Caco-2 (cell line): ENCODE measurements at regions of chr1 and their contacts with region 1.

Region 1: GRCh38 chr1:15489052-15489736 is 13.3 kb downstream of the CELA2B start:
- DNase-seq: no peak
- H3K4me3 ChIP-seq: no peak overlapping the region
- H3K4me3 Mint-ChIP-seq: no peak overlapping the region
- H3K27ac Mint-ChIP-seq: no peak overlapping the region
- H3K4me1 ChIP-seq: no peaks in the 10 kb centered on the region
- H3K4me1 Mint-ChIP-seq: no peaks in the 10 kb centered on the region
- H3K27me3 ChIP-seq: no peaks in the 10 kb centered on the region
- H3K27me3 Mint-ChIP-seq: no peaks in the 10 kb centered on the region
- CTCF ChIP-seq: no peak

Region 2: DNA sequence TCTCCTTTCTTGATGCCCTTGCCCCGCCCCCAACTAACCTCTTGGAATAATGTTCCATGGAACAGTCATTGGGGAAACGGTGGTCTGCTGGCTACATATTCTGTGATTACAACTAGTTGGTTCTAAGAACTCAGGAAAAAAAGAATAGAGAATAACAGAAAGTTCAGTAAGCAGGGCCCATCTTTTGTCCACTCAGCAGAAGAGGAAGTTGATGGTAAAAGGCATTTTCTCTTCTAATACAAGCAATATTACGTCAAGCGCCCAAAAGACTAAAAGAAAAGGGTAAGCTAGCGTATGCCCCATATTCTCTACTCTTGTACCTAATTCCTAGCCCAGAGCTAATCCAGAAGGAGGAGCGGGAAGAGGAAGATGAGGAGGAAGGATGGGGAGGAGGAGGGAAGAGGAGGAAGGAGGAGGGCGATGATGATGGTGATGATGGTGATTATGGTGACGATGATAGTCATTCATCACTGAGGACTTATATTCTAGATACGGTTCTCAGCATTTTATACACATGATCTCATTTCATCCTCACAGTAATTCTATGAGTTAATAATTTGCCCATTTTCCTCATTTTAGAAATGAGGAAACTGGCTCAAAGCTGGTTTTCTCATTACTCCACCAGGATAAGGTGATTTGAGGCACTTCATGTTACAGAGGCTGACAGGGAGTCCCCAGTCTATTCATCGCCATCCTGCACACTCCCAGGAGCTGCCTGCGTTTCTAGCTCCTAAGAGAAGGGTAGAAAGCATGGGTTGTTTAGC is 156.1 kb before region 1 on chr1:
- CTCF ChIA-PET with region 1: no interaction called
- POLR2A ChIA-PET with region 1: interaction called, 12 read pairs
- intact Hi-C with region 1: no loop called
- DNase-seq: no peak
- H3K4me3 ChIP-seq: no peak overlapping the region
- H3K4me3 Mint-ChIP-seq: no peak overlapping the region
- H3K27ac Mint-ChIP-seq: no peak overlapping the region
- H3K4me1 ChIP-seq: no peaks in the 10 kb centered on the region
- H3K4me1 Mint-ChIP-seq: no peaks in the 10 kb centered on the region
- H3K27me3 ChIP-seq: no peaks in the 10 kb centered on the region
- H3K27me3 Mint-ChIP-seq: peaks cover 3% of the 10 kb centered on the region
- CTCF ChIP-seq: no peak

Region 3: GRCh38 chr1:15444468-15445389 is 44.5 kb before region 1 on chr1:
- CTCF ChIA-PET with region 1: no interaction called
- POLR2A ChIA-PET with region 1: no interaction called
- intact Hi-C with region 1: no loop called
- DNase-seq: no peak
- H3K4me3 ChIP-seq: no peak overlapping the region
- H3K4me3 Mint-ChIP-seq: no peak overlapping the region
- H3K27ac Mint-ChIP-seq: no peak overlapping the region
- H3K4me1 ChIP-seq: no peaks in the 10 kb centered on the region
- H3K4me1 Mint-ChIP-seq: no peaks in the 10 kb centered on the region
- H3K27me3 ChIP-seq: no peaks in the 10 kb centered on the region; the same call in 1 of the 2 replicates
- H3K27me3 Mint-ChIP-seq: no peaks in the 10 kb centered on the region
- CTCF ChIP-seq: no peak

Region 4: DNA sequence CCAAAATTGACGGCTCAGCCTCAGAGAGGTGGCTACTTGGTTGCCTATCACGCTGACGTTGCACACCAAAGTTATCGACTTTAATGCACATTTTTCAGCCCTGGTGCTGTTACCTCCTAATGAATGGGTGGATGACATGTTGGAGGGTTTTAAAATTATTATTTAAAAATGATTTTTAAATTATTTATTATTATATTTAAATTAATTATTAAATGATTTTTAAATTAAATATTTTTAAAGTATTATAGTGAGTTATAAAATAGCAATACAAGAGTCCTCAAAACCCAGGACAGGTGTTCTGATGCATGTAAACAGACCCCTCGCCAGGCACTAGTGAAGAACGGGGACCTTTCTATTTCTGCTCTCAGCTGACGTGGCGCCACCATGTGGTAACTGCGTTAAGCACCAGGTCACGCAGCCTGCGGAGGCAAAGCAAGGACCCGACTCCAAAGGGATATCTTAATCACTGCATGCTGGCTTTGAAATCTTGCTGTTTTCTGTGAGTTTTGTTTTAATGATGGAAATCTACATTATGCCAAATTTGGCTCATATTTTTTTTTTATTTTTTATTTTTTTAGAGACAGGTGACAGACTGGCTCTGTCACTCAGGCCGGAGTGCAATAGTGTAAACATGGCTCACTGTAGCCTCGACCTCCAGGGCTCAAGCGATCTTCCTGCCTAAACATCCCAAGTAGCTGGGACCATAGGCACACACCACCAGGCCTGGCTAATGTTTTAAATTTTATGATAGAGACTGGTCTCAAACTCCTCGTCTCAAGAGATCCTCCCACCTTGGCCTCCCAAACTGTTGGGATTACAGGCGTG is 12.2 kb after region 1 on chr1:
- CTCF ChIA-PET with region 1: no interaction called
- POLR2A ChIA-PET with region 1: no interaction called
- intact Hi-C with region 1: no loop called
- DNase-seq: peak; percentile 52 to 65
- H3K4me3 ChIP-seq: no peak overlapping the region
- H3K4me3 Mint-ChIP-seq: no peak overlapping the region
- H3K27ac Mint-ChIP-seq: no peak overlapping the region
- H3K4me1 ChIP-seq: no peaks in the 10 kb centered on the region
- H3K4me1 Mint-ChIP-seq: no peaks in the 10 kb centered on the region
- H3K27me3 ChIP-seq: no peaks in the 10 kb centered on the region
- H3K27me3 Mint-ChIP-seq: no peaks in the 10 kb centered on the region
- CTCF ChIP-seq: peak; percentile 71 to 73

Region 5: DNA sequence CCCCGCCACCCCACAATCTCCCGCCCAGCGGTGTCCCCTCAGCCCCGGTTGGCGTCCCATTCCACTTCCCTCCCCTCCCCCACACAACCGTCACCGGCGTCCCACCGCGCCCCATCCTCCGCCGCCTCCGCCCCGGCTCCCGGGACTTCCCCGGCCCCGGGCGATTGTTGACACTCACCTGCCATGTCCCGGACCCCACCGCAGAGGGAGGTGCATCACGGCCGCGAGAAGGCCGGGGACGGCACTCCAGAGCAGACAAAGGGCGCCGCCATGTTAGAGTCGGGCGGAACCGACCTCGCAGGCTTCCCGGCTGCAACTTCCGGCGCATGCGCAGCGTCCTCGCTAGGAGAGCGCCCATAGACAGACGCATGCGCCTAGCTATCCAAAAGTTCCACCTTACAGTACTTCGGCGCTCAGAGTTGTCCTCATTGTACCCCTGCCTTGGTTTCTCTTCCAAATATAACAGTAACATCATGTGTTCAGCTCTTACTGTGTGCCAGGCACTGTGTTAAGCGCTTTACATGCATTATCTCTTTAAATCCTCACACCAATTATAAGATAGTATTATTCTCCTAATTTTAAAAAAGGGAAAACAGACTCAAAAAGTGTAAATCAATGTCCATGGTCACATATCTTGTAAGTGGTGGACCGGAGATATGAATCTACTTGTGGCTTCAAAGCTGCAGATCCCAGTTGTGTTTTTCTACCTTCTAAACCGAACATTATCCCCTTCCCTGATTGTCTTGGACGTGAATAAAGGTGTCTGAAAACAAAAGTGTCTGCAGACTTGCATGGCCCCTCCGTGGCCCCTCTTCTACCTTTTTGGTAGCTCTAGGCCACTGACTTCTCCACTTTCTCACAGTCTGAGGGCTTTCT is 486.8 kb after region 1 on chr1 and contains the start of gene ZBTB17:
- CTCF ChIA-PET with region 1: no interaction called
- POLR2A ChIA-PET with region 1: interaction called, 12 read pairs
- intact Hi-C with region 1: no loop called
- DNase-seq: peak; percentile 91
- H3K4me3 ChIP-seq: peak within 1 kb of the TSS; percentile 82
- H3K4me3 Mint-ChIP-seq: peak within 1 kb of the TSS; percentile 81
- H3K27ac Mint-ChIP-seq: peak within 1 kb of the TSS; percentile 55
- H3K4me1 ChIP-seq: 0 out of 2 replicates have a peak, but pooled peaks cover 4% of the 10 kb centered on the region
- H3K4me1 Mint-ChIP-seq: no peaks in the 10 kb centered on the region
- H3K27me3 ChIP-seq: no peaks in the 10 kb centered on the region
- H3K27me3 Mint-ChIP-seq: no peaks in the 10 kb centered on the region
- CTCF ChIP-seq: no peak
- total RNA-seq, gene ZBTB17: 21.5 and 23.5 TPM in 2 replicates